ENCODE measurements at regions of chr11 and their contacts with region 1.

Region 1: DNA sequence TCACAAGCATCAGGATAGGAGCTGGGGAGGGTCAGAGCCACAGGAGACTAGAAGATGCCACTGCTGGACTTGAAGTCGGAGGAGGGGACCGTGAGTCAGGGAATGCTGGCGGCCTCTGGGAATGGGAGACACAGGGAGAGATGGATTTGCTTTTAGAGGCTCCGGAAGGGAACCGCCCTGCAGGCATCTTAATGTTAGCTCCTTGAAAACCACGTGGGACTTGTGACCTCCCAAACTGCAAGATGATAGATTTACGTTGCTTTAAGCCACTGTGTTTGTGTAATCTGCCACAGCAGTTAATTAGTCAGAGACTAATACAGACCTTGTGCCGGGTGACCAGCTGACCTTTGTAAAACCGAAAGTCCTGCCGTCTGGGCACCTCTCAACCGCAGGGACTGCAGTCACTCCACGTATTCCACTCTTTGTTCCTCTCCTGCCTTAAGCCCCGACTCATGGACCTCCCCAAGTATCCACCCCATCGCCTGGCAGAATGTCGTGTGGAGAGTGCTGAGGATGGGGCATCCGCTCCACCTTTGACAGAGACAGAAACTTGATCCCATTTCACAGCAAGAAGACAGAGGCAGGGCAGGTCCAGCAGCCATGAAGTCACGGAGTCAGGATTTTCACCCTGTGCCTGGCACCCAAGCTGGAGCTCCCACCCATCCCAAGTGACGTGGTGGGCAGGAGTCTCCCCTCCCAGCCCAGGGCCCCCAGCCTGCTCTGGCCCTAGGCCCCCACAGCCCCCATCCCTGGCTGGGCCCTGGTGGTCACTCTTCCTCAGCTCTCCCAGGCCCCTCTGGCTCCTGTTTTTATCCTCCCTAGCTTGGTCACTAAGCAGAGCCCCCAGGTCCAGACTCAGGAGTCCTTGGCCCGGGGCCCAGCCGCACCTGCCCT is 19.4 kb upstream of the CTSD start:
- DNase-seq: no peak
- H3K4me3 ChIP-seq: no peak overlapping the region
- H3K27ac ChIP-seq: no peak overlapping the region
- H3K4me1 ChIP-seq: no peaks in the 10 kb centered on the region
- H3K27me3 ChIP-seq: no peaks in the 10 kb centered on the region
- CTCF ChIP-seq: no peak
- EP300 ChIP-seq: no peak
- POLR2A ChIP-seq: no peak

Region 2: DNA sequence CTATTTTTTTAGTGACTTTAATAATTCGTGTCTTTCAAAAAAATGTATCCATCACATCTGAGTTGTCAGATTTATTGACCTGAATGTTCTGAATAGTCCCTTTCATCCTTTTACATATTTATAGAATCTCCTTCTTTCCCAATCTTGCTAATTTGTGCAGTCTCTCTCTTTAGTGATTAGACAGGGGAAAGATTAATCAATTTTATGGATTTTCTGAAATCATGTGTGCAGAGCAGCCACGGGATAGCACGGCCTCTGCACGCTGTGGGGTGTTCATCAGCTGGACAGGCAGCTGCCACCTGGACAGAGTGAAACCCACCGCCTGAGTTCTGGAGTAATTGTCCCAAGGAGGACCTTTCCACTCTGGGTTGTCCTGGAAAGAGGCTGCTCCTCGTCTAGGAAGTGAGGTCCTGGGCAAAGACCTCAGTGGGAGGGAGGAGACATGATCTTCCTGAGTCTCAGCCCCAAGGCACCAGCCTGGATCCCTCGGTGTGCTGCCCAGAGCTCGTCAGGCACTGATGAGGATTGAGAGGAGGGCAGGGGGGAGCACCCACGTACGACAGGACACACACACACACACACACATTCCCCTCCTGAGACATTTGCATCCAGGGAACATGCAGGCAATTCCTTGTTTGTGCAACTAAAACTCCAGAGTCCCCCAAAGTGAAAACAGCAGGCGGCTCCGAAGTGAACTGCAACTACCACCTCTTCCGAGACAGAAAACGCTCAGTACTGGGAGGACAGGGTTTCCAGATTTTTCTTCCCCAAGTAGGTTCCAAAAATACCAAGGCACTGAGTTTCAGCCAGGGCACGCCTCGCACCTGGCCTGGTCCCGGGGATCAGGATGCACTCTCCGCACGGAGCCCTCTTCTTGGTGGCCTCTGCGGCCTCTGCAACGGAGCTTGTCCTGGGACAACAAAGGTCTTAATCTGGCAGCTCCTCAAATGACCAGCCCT is 108.6 kb before region 1 on chr11:
- intact Hi-C with region 1: no loop called
- DNase-seq: no peak
- H3K4me3 ChIP-seq: no peak overlapping the region
- H3K27ac ChIP-seq: no peak overlapping the region
- H3K4me1 ChIP-seq: no peaks in the 10 kb centered on the region
- H3K27me3 ChIP-seq: no peaks in the 10 kb centered on the region
- CTCF ChIP-seq: no peak
- EP300 ChIP-seq: no peak
- POLR2A ChIP-seq: no peak

Region 3: GRCh38 chr11:1739576-1739975 is 43.5 kb before region 1 on chr11:
- intact Hi-C with region 1: loop called in 1 of 4 experiments (anchors 10 kb)
- DNase-seq: no peak
- H3K4me3 ChIP-seq: no peak overlapping the region
- H3K27ac ChIP-seq: no peak overlapping the region
- H3K4me1 ChIP-seq: peaks cover 3% of the 10 kb centered on the region
- H3K27me3 ChIP-seq: no peaks in the 10 kb centered on the region
- CTCF ChIP-seq: no peak
- EP300 ChIP-seq: no peak
- POLR2A ChIP-seq: no peak

Measured in ovary (tissue), 10 donors.